ENCODE measurements at regions of chr10 and their contacts with region 1.

Region 1: DNA sequence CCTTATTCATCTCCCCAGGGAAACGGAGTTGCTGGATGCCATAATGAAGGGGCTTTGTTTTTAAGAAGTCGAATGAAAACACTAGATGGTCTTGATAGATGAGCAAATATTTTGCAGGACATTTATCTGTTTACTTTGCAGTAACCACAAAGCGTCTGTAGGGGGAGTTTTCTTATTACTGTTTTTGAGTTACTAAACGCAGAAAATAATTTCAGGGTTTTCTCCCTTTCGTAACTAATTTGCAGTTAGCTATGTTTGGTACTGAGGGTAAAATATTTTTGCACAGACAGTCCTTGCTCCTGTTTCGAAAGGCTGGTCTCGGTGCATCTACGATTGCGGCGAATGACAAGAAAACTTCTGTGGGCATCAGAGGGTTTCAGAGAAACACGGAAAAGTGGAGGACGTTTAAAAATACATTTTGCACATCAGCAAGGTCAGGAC is 505.6 kb upstream of the MKI67 start:
- DNase-seq: peak; percentile 35
- ATAC-seq: no peak
- H3K4me3 ChIP-seq: no peak overlapping the region
- H3K27ac ChIP-seq: no peak overlapping the region
- H3K4me1 ChIP-seq: peaks cover 21 to 35% of the 10 kb centered on the region in 2 experiments
- H3K27me3 ChIP-seq: peaks cover 20% of the 10 kb centered on the region
- CTCF ChIP-seq: peak; percentile 44 to 75 (median 70); a peak in 5 of 6 replicates
- POLR2A ChIP-seq: no peak
- RAD21 ChIP-seq: peak; percentile 53

Region 2: GRCh38 chr10:128186959-128187787 is 444.6 kb before region 1 on chr10:
- CTCF ChIA-PET with region 1: no interaction called
- POLR2A ChIA-PET with region 1: no interaction called
- RAD21 ChIA-PET with region 1: no interaction called
- intact Hi-C with region 1: no loop called
- DNase-seq: no peak
- ATAC-seq: no peak
- H3K4me3 ChIP-seq: no peak overlapping the region
- H3K27ac ChIP-seq: no peak overlapping the region
- H3K4me1 ChIP-seq: no peaks in the 10 kb centered on the region
- H3K27me3 ChIP-seq: peaks cover 43% of the 10 kb centered on the region
- CTCF ChIP-seq: no peak
- POLR2A ChIP-seq: no peak
- RAD21 ChIP-seq: no peak

Region 3: GRCh38 chr10:128710098-128710797 is 78.4 kb after region 1 on chr10:
- CTCF ChIA-PET with region 1: no interaction called
- POLR2A ChIA-PET with region 1: no interaction called
- RAD21 ChIA-PET with region 1: no interaction called
- intact Hi-C with region 1: no loop called
- DNase-seq: no peak
- ATAC-seq: no peak
- H3K4me3 ChIP-seq: no peak overlapping the region
- H3K27ac ChIP-seq: no peak overlapping the region
- H3K4me1 ChIP-seq: no peaks in the 10 kb centered on the region
- H3K27me3 ChIP-seq: peaks cover 34% of the 10 kb centered on the region
- CTCF ChIP-seq: no peak
- POLR2A ChIP-seq: no peak
- RAD21 ChIP-seq: no peak

Region 4: GRCh38 chr10:128843972-128844371 is 212.2 kb after region 1 on chr10:
- CTCF ChIA-PET with region 1: no interaction called
- POLR2A ChIA-PET with region 1: no interaction called
- RAD21 ChIA-PET with region 1: no interaction called
- intact Hi-C with region 1: loop called (anchors 5 kb)
- DNase-seq: peak; percentile 2
- ATAC-seq: no peak
- H3K4me3 ChIP-seq: no peak overlapping the region
- H3K27ac ChIP-seq: no peak overlapping the region
- H3K4me1 ChIP-seq: no peaks in the 10 kb centered on the region
- H3K27me3 ChIP-seq: peaks cover 17% of the 10 kb centered on the region; the same call in 1 of the 2 replicates
- CTCF ChIP-seq: peak; percentile 9 to 36 (median 12); a peak in 2 of 6 replicates
- POLR2A ChIP-seq: no peak
- RAD21 ChIP-seq: peak; percentile 48

Region 5: DNA sequence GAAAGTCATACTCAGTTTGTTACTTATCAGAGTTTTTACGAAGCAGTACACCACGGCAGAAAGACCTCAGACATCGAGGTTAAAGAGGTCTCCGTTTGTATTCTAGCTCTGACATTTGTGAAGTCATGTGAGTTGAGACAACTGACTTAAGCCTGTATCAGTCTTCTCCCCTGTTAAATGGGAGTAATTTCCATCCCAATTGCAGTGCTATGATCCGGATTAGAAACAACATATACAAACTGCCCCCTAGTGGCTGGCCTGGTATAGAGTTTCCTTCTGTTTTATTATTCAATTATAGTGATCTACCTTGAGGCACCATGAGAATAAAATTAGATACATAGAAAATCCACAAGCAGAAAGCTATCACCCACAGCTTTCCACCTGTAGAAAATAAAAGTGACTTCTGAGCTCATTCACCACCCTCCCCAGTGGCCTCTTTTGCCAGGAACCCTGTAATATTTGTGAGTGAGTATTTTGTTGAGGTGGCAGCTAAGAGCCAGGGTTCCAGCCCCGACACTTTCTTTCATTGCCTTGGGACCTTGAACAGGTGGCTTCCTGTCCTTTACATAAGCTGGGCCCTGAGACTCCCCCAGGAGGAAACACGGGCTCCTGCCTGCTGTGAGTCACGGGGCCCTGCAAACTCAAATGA is 228.0 kb after region 1 on chr10:
- CTCF ChIA-PET with region 1: no interaction called
- POLR2A ChIA-PET with region 1: no interaction called
- RAD21 ChIA-PET with region 1: no interaction called
- intact Hi-C with region 1: loop called (anchors 2 kb)
- DNase-seq: peak; percentile 34
- ATAC-seq: peak; percentile 84
- H3K4me3 ChIP-seq: no peak overlapping the region
- H3K27ac ChIP-seq: no peak overlapping the region
- H3K4me1 ChIP-seq: no peaks in the 10 kb centered on the region
- H3K27me3 ChIP-seq: peaks cover 13% of the 10 kb centered on the region; the same call in 1 of the 2 replicates
- CTCF ChIP-seq: peak; percentile 60 to 90 (median 72); a peak in 5 of 6 replicates
- POLR2A ChIP-seq: no peak
- RAD21 ChIP-seq: peak; percentile 75